ENCODE measurements at regions of chr11 and their contacts with region 1.

Region 1: GRCh38 chr11:128884703-128885338 is 6.3 kb upstream of the KCNJ5 start:
- DNase-seq: peak; percentile 76
- H3K4me3 ChIP-seq: no peak overlapping the region
- H3K27ac ChIP-seq: no peak overlapping the region
- H3K4me1 ChIP-seq: no peaks in the 10 kb centered on the region
- H3K27me3 ChIP-seq: peaks cover 26% of the 10 kb centered on the region
- CTCF ChIP-seq: peak; percentile 80 to 89 (median 86)
- EP300 ChIP-seq: no peak
- POLR2A ChIP-seq: no peak

Region 2: DNA sequence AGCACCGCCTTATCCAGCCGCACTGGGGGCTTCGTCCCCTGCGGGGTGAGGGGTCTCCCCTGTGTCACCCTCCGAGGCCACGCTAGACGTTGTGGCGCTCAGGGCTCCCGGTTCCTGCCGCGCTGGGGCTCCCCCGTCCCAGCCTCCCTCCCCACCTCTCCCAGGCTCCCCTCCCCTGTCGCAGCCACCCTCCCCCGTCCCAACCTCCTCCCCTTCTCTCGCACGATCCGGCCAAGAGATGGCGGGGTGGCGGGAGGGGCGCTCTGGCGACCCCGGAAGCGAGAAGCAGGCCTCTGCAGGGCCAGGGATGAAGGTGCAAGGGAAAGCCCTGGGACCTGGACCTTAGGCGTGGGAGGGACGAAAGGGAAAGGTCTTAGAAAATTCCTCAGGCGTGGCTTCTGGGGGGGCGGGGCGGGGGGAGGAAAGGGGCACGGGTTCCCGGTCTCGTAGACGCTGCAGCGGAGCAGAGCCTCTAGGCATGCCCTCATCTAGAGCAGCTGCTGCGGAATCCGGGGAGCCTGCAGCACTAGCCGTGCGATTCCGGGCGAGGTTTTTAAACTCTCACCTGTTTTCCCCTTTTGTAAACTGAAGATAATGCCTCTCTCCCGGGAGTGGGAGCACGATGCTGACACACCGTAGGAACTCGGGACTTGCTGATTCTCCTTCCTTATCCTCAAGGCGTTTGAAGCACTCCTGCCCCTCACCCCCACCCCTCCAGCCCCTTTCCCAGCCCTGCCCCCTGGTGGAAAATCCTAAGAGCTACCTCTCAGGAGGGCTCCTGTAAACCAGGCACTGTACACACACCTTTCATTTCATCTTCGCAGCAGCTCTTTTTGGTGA is 20.7 kb after region 1 on chr11:
- in situ Hi-C with region 1: no loop called
- intact Hi-C with region 1: no loop called
- DNase-seq: peak; percentile 43
- H3K4me3 ChIP-seq: peak overlapping the region; percentile 45 to 71 (median 48)
- H3K27ac ChIP-seq: peak overlapping the region; percentile 53 to 68 (median 62)
- H3K4me1 ChIP-seq: peaks cover 3 to 21% (median 16%) of the 10 kb centered on the region in 4 donors
- H3K27me3 ChIP-seq: peaks cover 5% of the 10 kb centered on the region
- CTCF ChIP-seq: peak in 4 of 5 experiments; percentile 24 to 53 (median 50)
- EP300 ChIP-seq: no peak
- POLR2A ChIP-seq: no peak

Region 3: GRCh38 chr11:128949791-128950454 is 65.1 kb after region 1 on chr11:
- in situ Hi-C with region 1: loop called (anchors 5 to 10 kb)
- intact Hi-C with region 1: loop called (anchors 2 kb)
- DNase-seq: no peak
- H3K4me3 ChIP-seq: no peak overlapping the region
- H3K27ac ChIP-seq: no peak overlapping the region
- H3K4me1 ChIP-seq: peaks cover 0 to 4% (median 0%) of the 10 kb centered on the region in 4 donors
- H3K27me3 ChIP-seq: no peaks in the 10 kb centered on the region
- CTCF ChIP-seq: no peak
- EP300 ChIP-seq: no peak
- POLR2A ChIP-seq: no peak

Region 4: DNA sequence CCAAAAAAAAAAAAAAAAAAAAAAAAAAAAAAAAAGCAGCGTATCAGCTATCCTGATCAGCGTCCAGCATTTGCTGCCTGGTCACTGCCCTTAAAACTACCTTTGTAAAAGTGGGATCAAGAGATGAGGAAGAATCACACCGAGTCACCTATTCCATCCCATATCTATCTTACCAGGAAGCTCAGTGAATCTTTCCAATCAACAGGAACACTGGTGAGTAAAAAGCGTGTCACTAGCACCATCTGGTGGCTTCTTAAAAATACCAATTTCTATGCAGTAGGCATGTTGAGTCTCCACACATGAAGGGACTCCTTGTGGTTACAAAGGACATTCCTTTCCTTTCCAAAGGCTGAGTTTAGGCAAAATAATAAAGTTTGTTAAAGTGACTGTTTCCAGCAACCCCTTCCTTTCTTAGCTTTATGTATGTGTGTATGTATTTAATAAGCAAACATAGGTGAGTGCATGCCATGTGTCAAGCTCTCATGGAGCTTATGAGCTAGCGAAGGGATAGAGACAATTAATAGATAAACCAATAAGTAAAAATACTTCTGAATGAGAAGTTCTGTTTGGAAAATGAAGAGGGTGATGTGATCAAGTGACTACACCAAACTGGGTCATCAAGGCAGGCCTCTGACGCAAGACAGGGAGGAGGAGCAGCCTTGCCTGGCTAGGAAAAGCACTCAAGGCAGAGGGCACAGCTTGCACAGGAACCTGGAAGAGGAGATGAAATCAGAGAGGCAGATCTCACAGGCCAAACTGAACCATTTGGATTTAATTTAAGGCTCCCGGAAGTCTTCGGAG is 71.8 kb after region 1 on chr11:
- in situ Hi-C with region 1: loop called (anchors 5 to 10 kb)
- intact Hi-C with region 1: loop called (anchors 2 kb)
- DNase-seq: peak; percentile 23
- H3K4me3 ChIP-seq: no peak overlapping the region
- H3K27ac ChIP-seq: no peak overlapping the region
- H3K4me1 ChIP-seq: no peaks in the 10 kb centered on the region
- H3K27me3 ChIP-seq: no peaks in the 10 kb centered on the region
- CTCF ChIP-seq: peak; percentile 53 to 84 (median 66)
- EP300 ChIP-seq: no peak
- POLR2A ChIP-seq: no peak

Region 5: GRCh38 chr11:129061466-129062194 is 176.8 kb after region 1 on chr11:
- in situ Hi-C with region 1: no loop called
- intact Hi-C with region 1: no loop called
- DNase-seq: no peak
- H3K4me3 ChIP-seq: no peak overlapping the region
- H3K27ac ChIP-seq: no peak overlapping the region
- H3K4me1 ChIP-seq: no peaks in the 10 kb centered on the region
- H3K27me3 ChIP-seq: no peaks in the 10 kb centered on the region
- CTCF ChIP-seq: no peak
- EP300 ChIP-seq: no peak
- POLR2A ChIP-seq: no peak

Region 6: DNA sequence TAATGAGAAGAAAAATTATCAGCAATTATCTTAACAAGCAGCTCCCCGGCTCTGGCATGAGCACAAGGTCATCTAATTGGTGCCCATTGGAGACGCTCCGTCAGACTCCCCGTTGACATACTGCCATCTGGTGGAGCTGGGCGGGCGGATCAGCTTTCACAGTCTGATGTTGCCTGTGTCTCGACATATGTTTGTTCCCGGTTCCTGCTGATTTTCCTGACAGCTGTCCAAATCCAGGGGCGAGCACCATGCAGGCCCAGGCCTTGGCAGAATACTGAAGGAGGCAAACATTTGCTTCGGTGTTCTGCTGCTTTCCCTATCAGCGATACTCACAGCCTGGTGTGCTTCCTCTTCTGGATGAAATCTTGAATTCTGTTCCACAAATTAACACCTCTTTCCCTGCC is 447.1 kb after region 1 on chr11:
- in situ Hi-C with region 1: loop called in 2 of 4 experiments (anchors 25 kb)
- intact Hi-C with region 1: no loop called
- DNase-seq: peak; percentile 88
- H3K4me3 ChIP-seq: no peak overlapping the region
- H3K27ac ChIP-seq: no peak overlapping the region
- H3K4me1 ChIP-seq: peaks cover 0 to 9% (median 5%) of the 10 kb centered on the region in 4 donors
- H3K27me3 ChIP-seq: no peaks in the 10 kb centered on the region
- CTCF ChIP-seq: peak; percentile 72 to 88 (median 83)
- EP300 ChIP-seq: no peak
- POLR2A ChIP-seq: no peak